Caco-2 (cell line): ENCODE measurements at regions of chr4 and their contacts with region 1.

Region 1: DNA sequence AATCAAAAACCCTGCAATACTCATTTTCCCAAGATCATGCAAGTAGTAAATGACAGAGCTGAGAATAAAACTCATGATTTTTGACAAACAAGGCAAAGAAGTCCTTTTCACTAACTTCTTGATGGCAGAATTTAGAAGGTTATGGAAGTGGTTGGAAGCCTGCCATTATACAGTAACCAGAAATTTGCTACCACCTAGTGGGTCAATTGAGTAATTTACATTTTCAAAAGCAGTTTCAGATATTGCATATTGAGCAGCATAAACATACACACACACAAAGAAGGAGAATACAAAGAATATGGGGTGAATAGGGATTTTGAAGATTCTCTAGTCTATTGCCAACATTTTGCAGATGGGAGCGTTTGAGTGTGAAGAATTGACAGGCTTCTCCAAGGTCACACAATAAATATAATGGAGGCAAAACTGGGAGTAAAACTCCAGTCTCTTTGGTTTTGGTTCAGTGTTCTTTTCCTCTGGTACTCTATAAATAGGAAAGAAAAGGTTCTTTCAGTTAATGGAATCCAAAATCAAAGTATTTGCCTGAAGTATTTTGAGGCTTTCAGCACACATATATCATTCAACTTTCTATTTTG is 70.2 kb downstream of the GC start:
- DNase-seq: peak in 1 of 2 experiments; percentile 21
- H3K4me3 ChIP-seq: no peak overlapping the region
- H3K4me3 Mint-ChIP-seq: no peak overlapping the region
- H3K27ac Mint-ChIP-seq: no peak overlapping the region
- H3K4me1 ChIP-seq: no peaks in the 10 kb centered on the region
- H3K4me1 Mint-ChIP-seq: no peaks in the 10 kb centered on the region
- H3K27me3 ChIP-seq: no peaks in the 10 kb centered on the region
- H3K27me3 Mint-ChIP-seq: no peaks in the 10 kb centered on the region
- CTCF ChIP-seq: peak; percentile 33 to 46

Region 2: GRCh38 chr4:71050809-71051208 is 662.9 kb before region 1 on chr4:
- CTCF ChIA-PET with region 1: no interaction called
- POLR2A ChIA-PET with region 1: no interaction called
- intact Hi-C with region 1: loop called (anchors 10 kb)
- DNase-seq: no peak
- H3K4me3 ChIP-seq: no peak overlapping the region
- H3K4me3 Mint-ChIP-seq: no peak overlapping the region
- H3K27ac Mint-ChIP-seq: no peak overlapping the region
- H3K4me1 ChIP-seq: no peaks in the 10 kb centered on the region
- H3K4me1 Mint-ChIP-seq: no peaks in the 10 kb centered on the region
- H3K27me3 ChIP-seq: no peaks in the 10 kb centered on the region
- H3K27me3 Mint-ChIP-seq: no peaks in the 10 kb centered on the region
- CTCF ChIP-seq: no peak

Region 3: GRCh38 chr4:71229477-71230270 is 484.0 kb before region 1 on chr4:
- CTCF ChIA-PET with region 1: no interaction called
- POLR2A ChIA-PET with region 1: no interaction called
- intact Hi-C with region 1: loop called (anchors 1 kb)
- DNase-seq: peak in 1 of 2 experiments; percentile 29
- H3K4me3 ChIP-seq: no peak overlapping the region
- H3K4me3 Mint-ChIP-seq: no peak overlapping the region
- H3K27ac Mint-ChIP-seq: no peak overlapping the region
- H3K4me1 ChIP-seq: peaks cover 12% of the 10 kb centered on the region
- H3K4me1 Mint-ChIP-seq: peaks cover 5% of the 10 kb centered on the region
- H3K27me3 ChIP-seq: no peaks in the 10 kb centered on the region
- H3K27me3 Mint-ChIP-seq: peaks cover 4% of the 10 kb centered on the region
- CTCF ChIP-seq: peak; percentile 26 to 59

Region 4: GRCh38 chr4:71494539-71494938 is 219.2 kb before region 1 on chr4:
- CTCF ChIA-PET with region 1: no interaction called
- POLR2A ChIA-PET with region 1: no interaction called
- intact Hi-C with region 1: loop called (anchors 1 kb)
- DNase-seq: no peak
- H3K4me3 ChIP-seq: no peak overlapping the region
- H3K4me3 Mint-ChIP-seq: no peak overlapping the region
- H3K27ac Mint-ChIP-seq: no peak overlapping the region
- H3K4me1 ChIP-seq: no peaks in the 10 kb centered on the region
- H3K4me1 Mint-ChIP-seq: no peaks in the 10 kb centered on the region
- H3K27me3 ChIP-seq: no peaks in the 10 kb centered on the region
- H3K27me3 Mint-ChIP-seq: peaks cover 6% of the 10 kb centered on the region
- CTCF ChIP-seq: peak in 1 of 2 experiments; percentile 18